ENCODE measurements at regions of chr11 and their contacts with region 1.

Region 1: DNA sequence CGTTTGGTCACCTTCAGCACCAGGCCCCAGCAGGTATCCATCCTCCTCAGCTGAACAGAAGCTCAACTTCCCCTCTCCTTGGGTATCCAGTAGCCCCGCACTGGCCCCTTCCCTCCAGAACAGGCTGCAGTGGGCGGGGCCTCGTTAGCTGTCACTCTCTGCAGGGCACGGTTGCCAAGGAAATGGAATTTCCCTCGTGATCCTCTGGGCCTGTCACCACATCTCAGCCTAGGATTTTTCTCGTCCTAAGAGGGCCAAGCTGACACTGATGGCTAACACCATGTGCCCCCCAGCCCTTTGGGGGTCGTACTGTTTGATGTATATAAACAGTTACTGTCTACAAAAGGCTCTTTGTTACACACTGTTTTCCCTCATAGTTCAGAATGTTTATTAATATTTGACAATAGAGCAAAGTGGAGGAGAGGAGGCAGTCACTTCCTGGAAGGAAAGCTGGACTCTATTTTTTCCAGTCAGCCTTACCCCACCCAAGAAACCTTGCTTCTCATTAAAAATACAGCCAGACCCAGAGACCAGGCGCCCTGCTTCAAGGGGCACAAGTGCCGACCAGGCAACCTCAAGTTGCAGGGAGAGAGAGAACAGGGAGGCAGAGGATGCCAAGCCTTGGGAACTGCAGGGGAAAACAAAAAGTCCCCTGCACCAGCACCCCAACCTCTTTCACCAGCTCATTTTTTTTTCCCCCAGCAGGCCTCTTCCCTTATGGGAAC is 44.5 kb downstream of the FEZ1 start:
- DNase-seq: no peak
- ATAC-seq: peak; percentile 87
- H3K4me3 ChIP-seq: no peak overlapping the region
- H3K27ac ChIP-seq: no peak overlapping the region; the same call in 1 of the 2 replicates
- H3K4me1 ChIP-seq: no peaks in the 10 kb centered on the region
- H3K27me3 ChIP-seq: no peaks in the 10 kb centered on the region
- CTCF ChIP-seq: peak in 1 of 3 experiments; percentile 6; a peak in 1 of 6 replicates
- EP300 ChIP-seq: no peak
- POLR2A ChIP-seq: no peak
- RAD21 ChIP-seq: no peak

Region 2: DNA sequence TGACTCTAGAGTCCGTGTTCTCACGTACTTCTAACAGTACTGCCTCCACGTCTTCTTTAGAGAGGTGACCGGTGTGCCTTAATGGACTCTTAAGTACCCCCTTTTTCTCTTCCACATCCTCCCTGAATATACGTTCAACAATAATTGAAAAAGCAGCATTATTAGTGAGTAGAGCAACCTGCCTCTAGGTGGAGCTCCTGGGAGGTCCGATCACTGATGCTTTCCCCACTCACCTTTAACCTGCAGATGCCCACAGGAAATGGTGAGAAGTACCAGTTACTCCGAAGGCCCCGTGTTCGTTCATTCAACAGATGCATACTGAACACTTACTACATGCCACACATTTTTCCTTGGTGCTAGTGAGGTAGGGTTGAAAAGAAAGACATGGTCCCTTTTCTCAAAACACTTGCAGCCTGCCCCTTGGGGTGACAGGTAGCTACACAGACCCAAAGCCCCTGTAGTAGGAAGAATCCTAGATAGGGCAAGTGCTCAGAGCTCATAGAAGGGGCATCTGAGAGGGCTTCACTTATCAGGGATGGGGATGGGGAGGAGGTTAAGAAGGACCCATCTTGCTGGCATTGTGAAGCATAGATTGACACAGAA is 28.2 kb before region 1 on chr11:
- CTCF ChIA-PET with region 1: interaction called, 85 read pairs
- POLR2A ChIA-PET with region 1: interaction called, 5 read pairs
- RAD21 ChIA-PET with region 1: no interaction called
- SMC1A ChIA-PET with region 1: no interaction called
- in situ Hi-C with region 1: no loop called
- intact Hi-C with region 1: no loop called
- DNase-seq: no peak
- ATAC-seq: peak; percentile 87
- H3K4me3 ChIP-seq: no peak overlapping the region
- H3K27ac ChIP-seq: no peak overlapping the region
- H3K4me1 ChIP-seq: no peaks in the 10 kb centered on the region
- H3K27me3 ChIP-seq: peaks cover 0 to 3% of the 10 kb centered on the region in 2 experiments; a peak in 2 of 4 replicates
- CTCF ChIP-seq: peak; percentile 52 to 69 (median 54); a peak in 5 of 6 replicates
- EP300 ChIP-seq: no peak
- POLR2A ChIP-seq: no peak
- RAD21 ChIP-seq: peak; percentile 33; the same call in 1 of the 2 replicates

Region 3: GRCh38 chr11:125429166-125429707 is 22.3 kb before region 1 on chr11:
- CTCF ChIA-PET with region 1: interaction called, 85 read pairs
- POLR2A ChIA-PET with region 1: interaction called, 5 read pairs
- RAD21 ChIA-PET with region 1: interaction called, 6 read pairs
- SMC1A ChIA-PET with region 1: interaction called, 3 read pairs
- in situ Hi-C with region 1: no loop called
- intact Hi-C with region 1: no loop called
- DNase-seq: no peak
- ATAC-seq: peak; percentile 83
- H3K4me3 ChIP-seq: no peak overlapping the region
- H3K27ac ChIP-seq: no peak overlapping the region
- H3K4me1 ChIP-seq: no peaks in the 10 kb centered on the region
- H3K27me3 ChIP-seq: peaks cover 0 to 3% of the 10 kb centered on the region in 2 experiments; a peak in 2 of 4 replicates
- CTCF ChIP-seq: peak; percentile 76 to 87 (median 83)
- EP300 ChIP-seq: no peak
- POLR2A ChIP-seq: no peak
- RAD21 ChIP-seq: peak; percentile 57

Region 4: GRCh38 chr11:125435461-125436238 is 15.9 kb before region 1 on chr11:
- CTCF ChIA-PET with region 1: interaction called, 85 read pairs
- POLR2A ChIA-PET with region 1: no interaction called
- RAD21 ChIA-PET with region 1: interaction called, 3 read pairs
- SMC1A ChIA-PET with region 1: interaction called, 4 read pairs
- in situ Hi-C with region 1: no loop called
- intact Hi-C with region 1: no loop called
- DNase-seq: no peak
- ATAC-seq: peak; percentile 54
- H3K4me3 ChIP-seq: no peak overlapping the region
- H3K27ac ChIP-seq: no peak overlapping the region
- H3K4me1 ChIP-seq: no peaks in the 10 kb centered on the region
- H3K27me3 ChIP-seq: no peaks in the 10 kb centered on the region
- CTCF ChIP-seq: no peak
- EP300 ChIP-seq: no peak
- POLR2A ChIP-seq: no peak
- RAD21 ChIP-seq: no peak

Region 5: DNA sequence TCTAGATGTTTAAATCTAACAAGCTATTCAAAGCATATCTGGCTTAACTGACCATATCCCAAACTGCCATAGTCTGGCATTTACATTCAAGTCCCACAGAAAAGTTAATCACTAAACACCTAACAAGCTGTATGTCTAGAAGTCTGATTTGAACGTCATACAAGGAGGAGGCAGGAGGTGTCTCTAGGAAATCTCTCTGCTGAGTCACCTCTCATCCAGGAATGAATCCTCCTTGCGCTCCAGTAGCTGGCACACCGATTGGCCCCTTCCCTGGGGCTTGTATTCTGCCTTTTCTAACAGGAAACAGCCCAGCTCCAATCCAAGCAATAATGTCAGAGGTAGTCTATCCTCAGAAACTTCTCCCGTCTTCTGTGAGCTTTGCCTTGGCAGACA is 12.7 kb after region 1 on chr11:
- CTCF ChIA-PET with region 1: interaction called, 34 read pairs
- POLR2A ChIA-PET with region 1: interaction called, 3 read pairs
- RAD21 ChIA-PET with region 1: no interaction called
- SMC1A ChIA-PET with region 1: no interaction called
- in situ Hi-C with region 1: no loop called
- intact Hi-C with region 1: no loop called
- DNase-seq: no peak
- ATAC-seq: no peak
- H3K4me3 ChIP-seq: no peak overlapping the region
- H3K27ac ChIP-seq: no peak overlapping the region
- H3K4me1 ChIP-seq: no peaks in the 10 kb centered on the region
- H3K27me3 ChIP-seq: no peaks in the 10 kb centered on the region
- CTCF ChIP-seq: no peak
- EP300 ChIP-seq: no peak
- POLR2A ChIP-seq: no peak
- RAD21 ChIP-seq: no peak